ENCODE measurements at regions of chr11 and their contacts with region 1.

Region 1: DNA sequence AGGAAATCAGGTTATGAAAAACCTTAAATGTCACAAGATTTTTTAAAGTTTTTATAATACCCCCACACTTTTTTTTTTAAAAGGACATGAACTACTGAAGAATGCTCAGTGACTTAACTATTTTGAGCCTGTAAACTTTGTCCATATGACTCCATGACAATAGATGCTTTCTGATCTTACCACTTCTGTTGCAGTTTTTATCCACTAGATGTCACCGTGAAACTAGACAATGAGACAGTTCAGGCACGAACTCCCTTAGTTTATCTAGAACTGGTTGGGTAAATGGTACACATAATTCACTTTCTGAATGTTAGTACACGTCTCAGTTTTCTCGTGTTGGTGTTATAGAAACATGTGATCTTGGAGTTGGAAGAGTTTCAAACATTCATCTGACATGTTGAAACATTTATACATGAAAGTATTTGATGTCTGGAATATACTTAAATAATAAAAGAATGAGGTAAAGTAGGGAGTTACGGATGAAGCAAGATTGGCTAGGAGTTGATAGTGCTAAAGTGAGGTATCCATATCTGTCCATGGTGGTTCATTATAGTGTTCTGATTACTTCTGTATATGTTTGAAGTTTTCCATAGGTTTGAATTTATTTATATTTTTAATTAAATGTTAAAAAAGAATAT is 8.1 kb downstream of the CCDC15 start:
- DNase-seq: peak; percentile 91
- ATAC-seq: peak; percentile 98
- H3K4me3 ChIP-seq: no peak overlapping the region
- H3K27ac ChIP-seq: no peak overlapping the region
- H3K4me1 ChIP-seq: no peaks in the 10 kb centered on the region
- H3K27me3 ChIP-seq: no peaks in the 10 kb centered on the region
- CTCF ChIP-seq: peak; percentile 96

Region 2: GRCh38 chr11:124900464-124900863 is 61.6 kb before region 1 on chr11:
- CTCF ChIA-PET with region 1: interaction called, 12 read pairs
- POLR2A ChIA-PET with region 1: interaction called, 6 read pairs
- intact Hi-C with region 1: no loop called
- DNase-seq: peak; percentile 98
- ATAC-seq: peak; percentile 60
- H3K4me3 ChIP-seq: peak overlapping the region; percentile 41; the same call in 1 of the 2 replicates
- H3K27ac ChIP-seq: peak overlapping the region; percentile 88
- H3K4me1 ChIP-seq: peaks cover 73% of the 10 kb centered on the region
- H3K27me3 ChIP-seq: no peaks in the 10 kb centered on the region
- CTCF ChIP-seq: no peak

Region 3: GRCh38 chr11:125091247-125091876 is 129.3 kb after region 1 on chr11:
- CTCF ChIA-PET with region 1: interaction called, 3 read pairs
- POLR2A ChIA-PET with region 1: no interaction called
- intact Hi-C with region 1: loop called (anchors 1 kb)
- DNase-seq: peak; percentile 62
- ATAC-seq: peak; percentile 82
- H3K4me3 ChIP-seq: no peak overlapping the region
- H3K27ac ChIP-seq: no peak overlapping the region
- H3K4me1 ChIP-seq: peaks cover 8% of the 10 kb centered on the region; the same call in 1 of the 2 replicates
- H3K27me3 ChIP-seq: no peaks in the 10 kb centered on the region
- CTCF ChIP-seq: peak; percentile 89

Region 4: DNA sequence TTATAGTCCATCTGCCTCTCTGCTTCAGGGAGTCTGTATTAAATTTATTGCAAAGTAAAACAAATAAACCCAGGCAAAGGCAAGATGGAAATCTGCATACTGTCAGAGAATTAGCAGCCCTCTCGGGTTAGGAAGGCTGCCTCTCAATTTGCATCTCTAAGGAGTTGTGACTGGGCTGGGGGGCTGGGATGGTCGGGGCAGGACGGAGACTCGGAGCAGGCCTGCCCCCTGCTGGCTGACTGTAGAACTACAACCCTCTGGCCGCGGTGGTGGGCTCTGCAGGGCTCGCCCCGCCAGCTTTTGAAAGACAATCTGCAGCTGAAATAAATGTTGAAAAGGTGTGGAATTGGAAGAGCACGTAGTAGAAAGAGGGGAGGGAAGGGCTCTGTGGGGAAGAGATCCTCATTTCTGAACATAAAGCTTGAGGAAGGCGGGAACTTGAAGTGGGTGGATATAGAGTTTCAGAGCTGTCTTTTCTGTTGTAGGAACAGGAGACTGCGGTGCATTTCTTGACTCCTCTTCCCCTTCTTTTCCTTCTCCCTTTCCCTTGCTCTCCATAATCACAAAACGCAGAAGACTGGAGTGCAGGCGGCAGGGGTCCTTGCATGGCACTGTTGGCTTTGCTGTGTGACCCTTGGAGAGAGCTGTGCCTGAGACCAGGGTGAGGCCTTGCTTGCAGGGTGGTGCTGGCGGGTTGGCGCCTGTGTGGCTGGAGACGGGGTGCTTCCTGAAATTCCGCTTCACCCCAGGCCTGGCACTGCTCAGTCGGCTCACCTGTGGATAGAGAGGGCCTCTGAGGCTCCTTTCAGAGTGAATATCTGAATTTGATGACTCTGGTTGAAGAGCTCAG is 179.8 kb after region 1 on chr11:
- CTCF ChIA-PET with region 1: no interaction called
- POLR2A ChIA-PET with region 1: no interaction called
- intact Hi-C with region 1: loop called (anchors 1 kb)
- DNase-seq: peak; percentile 63
- ATAC-seq: peak; percentile 93
- H3K4me3 ChIP-seq: no peak overlapping the region
- H3K27ac ChIP-seq: no peak overlapping the region
- H3K4me1 ChIP-seq: peaks cover 3% of the 10 kb centered on the region; the same call in 1 of the 2 replicates
- H3K27me3 ChIP-seq: peaks cover 18% of the 10 kb centered on the region; the same call in 1 of the 2 replicates
- CTCF ChIP-seq: peak; percentile 99

Region 5: DNA sequence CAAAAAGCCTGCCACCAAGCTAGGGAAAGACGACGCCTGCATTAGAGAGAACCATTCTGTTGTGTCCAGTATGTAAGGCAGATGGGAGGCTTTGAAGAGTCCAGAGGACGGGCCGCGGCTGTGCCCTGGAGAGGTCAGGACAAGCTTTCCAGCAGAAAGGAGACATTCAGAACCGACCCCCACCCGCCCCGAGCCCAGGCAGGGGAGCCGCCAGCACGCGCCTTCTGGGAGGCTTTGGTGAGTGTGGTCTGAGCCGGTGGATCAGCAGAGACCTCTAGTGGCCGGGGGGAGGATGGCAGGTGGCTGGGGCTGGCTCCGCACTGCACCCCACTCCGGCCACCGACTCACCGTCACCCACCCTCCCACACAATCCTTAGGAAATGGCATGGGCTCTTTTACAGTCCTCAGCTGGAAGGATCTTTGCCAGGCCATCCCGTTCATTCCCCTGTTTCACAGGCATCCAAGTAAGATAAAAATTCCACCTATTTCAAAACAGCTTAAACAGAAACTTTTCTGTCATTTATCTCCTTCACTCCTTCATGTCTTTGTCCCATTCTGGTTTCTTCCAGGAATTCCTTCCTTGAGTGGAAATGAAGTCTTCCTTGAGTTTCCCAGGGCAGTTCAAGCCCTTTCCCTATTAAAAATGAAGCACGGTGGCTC is 442.8 kb after region 1 on chr11:
- CTCF ChIA-PET with region 1: no interaction called
- POLR2A ChIA-PET with region 1: no interaction called
- intact Hi-C with region 1: loop called (anchors 1 kb)
- DNase-seq: peak; percentile 50
- ATAC-seq: peak; percentile 95
- H3K4me3 ChIP-seq: no peak overlapping the region
- H3K27ac ChIP-seq: no peak overlapping the region
- H3K4me1 ChIP-seq: no peaks in the 10 kb centered on the region
- H3K27me3 ChIP-seq: peaks cover 96% of the 10 kb centered on the region
- CTCF ChIP-seq: peak; percentile 88

Measured in PC-3 (cell line).